Panc1 (cell line): ENCODE measurements at regions of chr5 and their contacts with region 1.

Region 1: DNA sequence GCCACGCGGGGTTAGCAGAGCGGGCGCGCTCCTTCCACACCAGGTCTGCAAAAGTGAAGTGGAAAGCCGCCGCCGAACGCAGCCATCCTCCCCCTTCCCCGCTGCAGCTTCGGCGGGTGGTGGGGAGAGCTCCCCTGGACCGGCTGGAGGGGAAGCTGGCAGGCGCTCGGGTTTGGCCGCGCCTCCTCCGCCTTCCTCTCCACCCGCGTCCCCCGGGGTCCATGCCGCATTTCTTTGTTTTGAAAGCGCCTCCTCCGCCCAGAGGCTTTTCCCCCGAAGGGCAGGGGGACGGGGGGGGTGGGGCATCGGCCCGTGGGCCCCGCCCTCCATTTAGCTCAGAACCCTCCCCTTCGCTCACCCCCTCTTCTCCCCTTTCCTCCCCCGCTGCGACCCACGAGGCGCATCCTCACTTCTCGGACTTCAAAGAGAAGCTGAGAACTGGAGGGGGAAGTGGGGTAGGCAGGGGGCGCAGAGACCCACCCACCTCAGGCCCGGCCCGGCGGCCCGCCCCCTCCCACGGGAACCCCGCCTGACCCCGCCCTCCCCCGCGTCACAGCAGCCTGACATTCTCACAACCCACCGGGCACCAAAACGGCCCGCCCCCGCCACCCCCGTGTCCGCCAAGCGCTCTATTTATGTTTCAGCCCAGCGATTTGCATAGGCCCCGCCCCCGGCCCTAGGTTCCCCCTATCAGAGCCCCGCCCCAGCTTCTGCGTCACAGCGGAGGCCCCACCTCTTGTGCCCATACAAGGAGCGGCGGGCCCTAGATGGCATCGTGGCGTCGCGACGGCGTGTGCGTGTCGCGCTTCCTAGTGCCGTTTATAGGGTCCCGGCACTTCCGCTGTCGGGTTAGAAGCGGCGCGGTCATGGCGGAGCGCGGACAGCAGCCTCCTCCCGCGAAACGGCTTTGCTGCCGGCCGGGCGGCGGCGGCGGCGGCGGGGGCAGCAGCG is at the start of gene ZSWIM6:
- DNase-seq: peak; percentile 86
- ATAC-seq: peak; percentile 88
- H3K4me3 ChIP-seq: peak within 1 kb of the TSS; percentile 76 to 84
- H3K27ac ChIP-seq: peak within 1 kb of the TSS; percentile 48; the same call in 1 of the 2 replicates
- H3K4me1 ChIP-seq: peaks cover 14% of the 10 kb centered on the region
- H3K27me3 ChIP-seq: no peaks in the 10 kb centered on the region
- CTCF ChIP-seq: no peak
- total RNA-seq, gene ZSWIM6: 10.8 TPM

Region 2: GRCh38 chr5:61010467-61011454 is 320.9 kb before region 1 on chr5:
- CTCF ChIA-PET with region 1: no interaction called
- POLR2A ChIA-PET with region 1: no interaction called
- in situ Hi-C with region 1: no loop called
- intact Hi-C with region 1: no loop called
- DNase-seq: no peak
- ATAC-seq: no peak
- H3K4me3 ChIP-seq: no peak overlapping the region
- H3K27ac ChIP-seq: no peak overlapping the region
- H3K4me1 ChIP-seq: no peaks in the 10 kb centered on the region
- H3K27me3 ChIP-seq: no peaks in the 10 kb centered on the region
- CTCF ChIP-seq: peak; percentile 47

Region 3: DNA sequence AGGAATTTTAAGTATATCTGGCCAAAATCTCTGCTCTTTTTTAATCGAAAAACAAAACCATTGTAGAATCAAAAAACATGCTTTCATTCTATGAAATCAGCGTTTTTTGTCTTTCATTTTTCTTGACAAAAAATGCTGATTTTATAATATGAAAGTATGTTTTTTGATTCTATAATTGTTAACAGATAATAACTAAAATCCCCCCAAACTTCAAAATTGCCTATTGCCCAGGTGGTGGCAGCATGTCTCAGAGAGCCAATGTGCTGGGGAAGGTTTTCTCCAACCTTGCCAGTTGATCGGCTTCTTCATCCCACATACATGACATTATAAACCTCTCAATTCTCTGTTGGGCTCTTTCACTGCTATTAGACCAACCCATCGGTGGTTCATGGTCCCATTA is 164.3 kb before region 1 on chr5:
- CTCF ChIA-PET with region 1: interaction called, 5 read pairs
- POLR2A ChIA-PET with region 1: interaction called, 5 read pairs
- in situ Hi-C with region 1: no loop called
- intact Hi-C with region 1: loop called (anchors 2 kb)
- DNase-seq: no peak
- ATAC-seq: no peak
- H3K4me3 ChIP-seq: no peak overlapping the region
- H3K27ac ChIP-seq: no peak overlapping the region
- H3K4me1 ChIP-seq: peaks cover 14% of the 10 kb centered on the region
- H3K27me3 ChIP-seq: no peaks in the 10 kb centered on the region
- CTCF ChIP-seq: peak; percentile 72

Region 4: GRCh38 chr5:61301341-61302199 is 30.1 kb before region 1 on chr5:
- CTCF ChIA-PET with region 1: no interaction called
- POLR2A ChIA-PET with region 1: interaction called, 13 read pairs
- in situ Hi-C with region 1: no loop called
- intact Hi-C with region 1: no loop called
- DNase-seq: peak; percentile 96
- ATAC-seq: peak; percentile 92
- H3K4me3 ChIP-seq: peak overlapping the region; percentile 15 to 55; a peak in 3 of 4 replicates
- H3K27ac ChIP-seq: peak overlapping the region; percentile 76
- H3K4me1 ChIP-seq: peaks cover 47% of the 10 kb centered on the region
- H3K27me3 ChIP-seq: no peaks in the 10 kb centered on the region
- CTCF ChIP-seq: no peak

Region 5: GRCh38 chr5:61394078-61394704 is 62.5 kb after region 1 on chr5:
- CTCF ChIA-PET with region 1: no interaction called
- POLR2A ChIA-PET with region 1: no interaction called
- in situ Hi-C with region 1: no loop called
- intact Hi-C with region 1: no loop called
- DNase-seq: no peak
- ATAC-seq: no peak
- H3K4me3 ChIP-seq: no peak overlapping the region
- H3K27ac ChIP-seq: no peak overlapping the region
- H3K4me1 ChIP-seq: no peaks in the 10 kb centered on the region
- H3K27me3 ChIP-seq: no peaks in the 10 kb centered on the region
- CTCF ChIP-seq: no peak

Region 6: GRCh38 chr5:61658592-61659008 is 326.9 kb after region 1 on chr5:
- CTCF ChIA-PET with region 1: no interaction called
- POLR2A ChIA-PET with region 1: no interaction called
- in situ Hi-C with region 1: no loop called
- intact Hi-C with region 1: loop called (anchors 5 kb)
- DNase-seq: peak; percentile 64
- ATAC-seq: peak; percentile 95
- H3K4me3 ChIP-seq: no peak overlapping the region
- H3K27ac ChIP-seq: no peak overlapping the region
- H3K4me1 ChIP-seq: no peaks in the 10 kb centered on the region; the same call in 1 of the 2 replicates
- H3K27me3 ChIP-seq: peaks cover 5% of the 10 kb centered on the region; the same call in 1 of the 2 replicates
- CTCF ChIP-seq: peak; percentile 96

Region 7: GRCh38 chr5:61817472-61818326 is 486.0 kb after region 1 on chr5:
- CTCF ChIA-PET with region 1: no interaction called
- POLR2A ChIA-PET with region 1: no interaction called
- in situ Hi-C with region 1: no loop called
- intact Hi-C with region 1: loop called (anchors 10 kb)
- DNase-seq: peak; percentile 15
- ATAC-seq: peak; percentile 86
- H3K4me3 ChIP-seq: no peak overlapping the region
- H3K27ac ChIP-seq: no peak overlapping the region
- H3K4me1 ChIP-seq: no peaks in the 10 kb centered on the region
- H3K27me3 ChIP-seq: peaks cover 42% of the 10 kb centered on the region
- CTCF ChIP-seq: peak; percentile 77